A673 (cell line): ENCODE measurements at regions of chr22 and their contacts with region 1.

Region 1: DNA sequence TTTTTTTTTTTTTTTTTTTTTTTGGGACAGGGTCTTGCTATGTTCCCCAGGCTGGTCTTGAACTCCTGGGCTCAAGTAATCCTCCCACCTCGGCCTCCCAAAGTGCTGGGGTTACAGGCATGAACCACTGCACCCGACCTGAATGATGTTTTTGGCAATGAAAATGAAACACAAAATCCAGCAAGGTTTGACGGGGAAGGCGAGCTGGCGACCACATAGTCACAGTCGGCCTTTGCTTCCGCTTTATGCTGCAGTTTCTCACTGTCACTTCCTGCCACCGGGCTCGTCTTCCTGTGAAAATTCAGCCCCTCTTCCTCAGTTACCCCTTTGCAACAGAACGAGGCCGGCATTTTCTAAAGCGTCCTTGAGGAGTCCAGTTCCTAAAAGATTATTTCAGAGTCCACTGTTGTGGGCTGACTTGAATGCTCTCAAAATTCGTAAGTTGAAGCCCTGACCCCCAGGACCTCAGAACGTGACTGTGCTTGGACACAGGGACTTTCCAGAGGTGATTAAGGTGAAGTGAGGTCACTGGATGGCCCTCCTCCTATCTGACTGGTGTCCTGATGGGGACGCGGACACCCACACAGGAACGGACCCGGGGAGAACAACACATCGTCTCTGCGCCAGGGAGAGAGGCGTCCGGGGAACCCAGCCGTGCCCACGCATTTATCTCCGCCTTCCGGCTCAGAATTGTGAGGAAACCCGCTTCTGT is 2.9 kb upstream of the BID start:
- DNase-seq: no peak
- H3K4me3 ChIP-seq: no peak overlapping the region
- H3K27ac ChIP-seq: no peak overlapping the region
- H3K4me1 ChIP-seq: peaks cover 25% of the 10 kb centered on the region
- H3K27me3 ChIP-seq: no peaks in the 10 kb centered on the region
- CTCF ChIP-seq: no peak

Region 2: GRCh38 chr22:18000423-18001039 is 223.4 kb after region 1 on chr22:
- CTCF ChIA-PET with region 1: interaction called, 13 read pairs
- POLR2A ChIA-PET with region 1: no interaction called
- intact Hi-C with region 1: no loop called
- DNase-seq: peak; percentile 41
- H3K4me3 ChIP-seq: peak overlapping the region; percentile 90
- H3K27ac ChIP-seq: peak overlapping the region; percentile 93
- H3K4me1 ChIP-seq: peaks cover 9% of the 10 kb centered on the region
- H3K27me3 ChIP-seq: no peaks in the 10 kb centered on the region
- CTCF ChIP-seq: no peak